ENCODE measurements at regions of chr14 and their contacts with region 1.

Region 1: DNA sequence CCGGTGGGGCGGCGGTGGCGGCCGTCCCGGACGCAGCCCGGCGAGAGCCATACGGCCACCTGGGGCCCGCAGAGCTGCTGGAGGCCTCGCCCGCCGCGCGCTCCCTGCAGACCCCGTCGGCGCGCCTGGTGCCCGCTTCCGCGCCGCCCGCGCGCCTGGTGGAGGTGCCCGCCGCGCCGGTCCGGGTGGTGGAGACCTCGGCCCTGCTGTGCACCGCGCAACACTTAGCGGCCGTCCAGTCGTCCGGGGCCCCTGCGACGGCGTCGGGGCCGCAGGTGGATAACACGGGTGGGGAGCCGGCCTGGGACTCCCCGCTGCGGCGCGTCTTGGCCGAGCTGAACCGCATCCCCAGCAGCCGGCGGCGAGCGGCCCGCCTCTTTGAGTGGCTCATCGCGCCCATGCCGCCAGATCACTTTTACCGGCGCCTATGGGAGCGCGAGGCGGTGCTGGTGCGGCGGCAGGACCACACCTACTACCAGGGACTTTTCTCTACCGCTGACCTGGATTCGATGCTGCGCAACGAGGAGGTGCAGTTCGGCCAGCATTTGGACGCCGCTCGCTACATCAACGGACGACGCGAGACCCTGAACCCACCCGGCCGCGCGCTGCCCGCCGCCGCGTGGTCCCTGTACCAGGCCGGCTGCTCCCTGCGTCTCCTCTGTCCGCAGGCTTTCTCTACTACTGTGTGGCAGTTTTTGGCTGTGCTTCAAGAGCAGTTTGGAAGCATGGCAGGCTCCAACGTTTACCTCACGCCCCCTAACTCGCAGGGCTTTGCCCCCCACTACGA is 716 bp downstream of the RIOX1 start:
- DNase-seq: peak; percentile 75 to 79
- H3K4me3 ChIP-seq: peak overlapping the region; percentile 76
- H3K27ac ChIP-seq: peak overlapping the region; percentile 52; the same call in 1 of the 2 replicates
- H3K4me1 ChIP-seq: peaks cover 23% of the 10 kb centered on the region
- H3K27me3 ChIP-seq: no peaks in the 10 kb centered on the region
- CTCF ChIP-seq: no peak

Region 2: GRCh38 chr14:72598311-72598710 is 893.1 kb before region 1 on chr14:
- CTCF ChIA-PET with region 1: no interaction called
- POLR2A ChIA-PET with region 1: no interaction called
- intact Hi-C with region 1: no loop called
- DNase-seq: no peak
- H3K4me3 ChIP-seq: no peak overlapping the region
- H3K27ac ChIP-seq: no peak overlapping the region
- H3K4me1 ChIP-seq: no peaks in the 10 kb centered on the region
- H3K27me3 ChIP-seq: peaks cover 93% of the 10 kb centered on the region
- CTCF ChIP-seq: no peak

Region 3: DNA sequence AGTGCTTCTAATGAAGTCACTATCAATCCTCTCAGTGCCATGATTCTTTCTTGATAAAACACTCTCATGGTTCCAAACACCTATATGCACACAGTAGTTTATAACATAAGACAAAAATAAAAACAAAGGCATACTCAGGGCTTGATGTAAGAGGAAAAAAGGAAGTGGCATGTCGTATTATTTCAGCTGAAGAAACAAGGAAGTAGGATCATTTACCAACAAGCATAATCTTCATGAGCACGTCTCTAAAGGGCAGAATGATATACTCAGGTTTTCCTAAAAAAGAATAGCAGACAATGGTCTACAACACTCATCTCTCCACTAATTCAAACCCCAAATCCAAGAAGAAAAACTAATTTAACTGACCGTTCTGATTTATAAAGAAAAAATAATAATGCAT is 67.0 kb before region 1 on chr14:
- CTCF ChIA-PET with region 1: no interaction called
- POLR2A ChIA-PET with region 1: no interaction called
- intact Hi-C with region 1: no loop called
- DNase-seq: no peak
- H3K4me3 ChIP-seq: no peak overlapping the region
- H3K27ac ChIP-seq: no peak overlapping the region
- H3K4me1 ChIP-seq: no peaks in the 10 kb centered on the region
- H3K27me3 ChIP-seq: no peaks in the 10 kb centered on the region
- CTCF ChIP-seq: no peak

Region 4: GRCh38 chr14:73458151-73458976 is 33.1 kb before region 1 on chr14 and contains the start of gene NUMB:
- CTCF ChIA-PET with region 1: no interaction called
- POLR2A ChIA-PET with region 1: interaction called, 11 read pairs
- intact Hi-C with region 1: no loop called
- DNase-seq: peak; percentile 97 to 99
- H3K4me3 ChIP-seq: peak within 1 kb of the TSS; percentile 86
- H3K27ac ChIP-seq: 0 out of 2 replicates have a peak within 1 kb of the TSS, but pooled peaks have one; percentile 18
- H3K4me1 ChIP-seq: peaks cover 30% of the 10 kb centered on the region
- H3K27me3 ChIP-seq: no peaks in the 10 kb centered on the region
- CTCF ChIP-seq: no peak
- total RNA-seq, gene NUMB: 59.2 and 64.5 TPM in 2 replicates

Region 5: DNA sequence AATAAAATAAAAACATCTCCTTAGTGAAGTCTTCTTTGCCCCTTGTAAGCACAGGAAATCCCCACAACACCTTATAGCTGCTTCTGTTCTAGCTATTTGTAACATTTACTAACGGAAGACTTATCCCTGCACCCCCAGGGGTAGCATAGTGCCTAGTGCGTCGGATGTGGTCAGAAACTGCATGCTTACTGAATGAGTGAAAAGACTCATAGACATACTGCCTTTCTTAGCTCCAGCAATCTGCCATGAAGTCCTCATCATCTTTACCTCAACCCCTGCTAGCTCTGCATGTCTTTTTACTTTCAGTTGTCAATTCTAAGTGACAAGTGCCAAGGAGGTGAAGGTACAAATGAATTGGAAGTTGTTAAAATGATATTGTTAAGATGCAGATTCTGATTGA is 12.2 kb after region 1 on chr14:
- CTCF ChIA-PET with region 1: interaction called, 16 read pairs
- POLR2A ChIA-PET with region 1: interaction called, 3 read pairs
- intact Hi-C with region 1: no loop called
- DNase-seq: no peak
- H3K4me3 ChIP-seq: no peak overlapping the region
- H3K27ac ChIP-seq: no peak overlapping the region
- H3K4me1 ChIP-seq: no peaks in the 10 kb centered on the region
- H3K27me3 ChIP-seq: no peaks in the 10 kb centered on the region
- CTCF ChIP-seq: no peak

Region 6: GRCh38 chr14:73686901-73687300 is 195.5 kb after region 1 on chr14:
- CTCF ChIA-PET with region 1: no interaction called
- POLR2A ChIA-PET with region 1: no interaction called
- intact Hi-C with region 1: no loop called
- DNase-seq: no peak
- H3K4me3 ChIP-seq: no peak overlapping the region
- H3K27ac ChIP-seq: no peak overlapping the region
- H3K4me1 ChIP-seq: no peaks in the 10 kb centered on the region
- H3K27me3 ChIP-seq: no peaks in the 10 kb centered on the region
- CTCF ChIP-seq: no peak

Region 7: GRCh38 chr14:74018586-74019407 is 527.3 kb after region 1 on chr14 and contains the starts of genes BBOF1 and ENTPD5:
- CTCF ChIA-PET with region 1: no interaction called
- POLR2A ChIA-PET with region 1: interaction called, 12 read pairs
- intact Hi-C with region 1: no loop called
- DNase-seq: peak; percentile 57 to 87
- H3K4me3 ChIP-seq: peak within 1 kb of the TSS; percentile 79
- H3K27ac ChIP-seq: peak within 1 kb of the TSS; percentile 81
- H3K4me1 ChIP-seq: peaks cover 8% of the 10 kb centered on the region
- H3K27me3 ChIP-seq: no peaks in the 10 kb centered on the region
- CTCF ChIP-seq: no peak
- total RNA-seq, gene BBOF1: 5.5 and 6.8 TPM in 2 replicates
- total RNA-seq, gene ENTPD5: 12.3 and 12.6 TPM in 2 replicates